ENCODE measurements at regions of chr19 and their contacts with region 1.

Region 1: DNA sequence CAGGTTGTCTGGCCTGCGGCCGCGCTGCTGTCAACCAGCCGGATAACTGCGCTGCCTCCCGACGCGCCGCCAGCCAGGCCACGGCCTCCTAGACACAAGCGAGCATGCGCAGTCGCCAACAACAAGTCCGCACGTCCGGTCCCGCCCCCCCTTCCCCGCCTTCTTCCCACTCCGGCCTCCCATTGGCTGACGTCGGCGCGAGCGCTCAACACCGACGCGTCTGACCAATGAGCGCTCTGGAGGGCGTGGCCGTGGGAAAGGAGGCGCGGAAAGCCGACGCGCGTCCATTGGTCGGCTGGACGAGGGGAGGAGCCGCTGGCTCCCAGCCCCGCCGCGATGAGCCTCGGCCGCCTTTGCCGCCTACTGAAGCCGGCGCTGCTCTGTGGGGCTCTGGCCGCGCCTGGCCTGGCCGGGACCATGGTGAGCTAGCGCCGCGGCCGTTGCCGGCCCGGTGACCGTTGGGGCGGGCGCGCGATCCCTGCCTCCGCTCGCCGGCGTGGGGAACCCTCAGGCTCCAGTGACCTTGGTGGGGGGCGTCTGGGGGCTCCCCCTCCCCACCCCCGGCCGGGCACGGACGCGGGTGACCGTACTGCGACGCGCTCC is at the start of gene GPX4:
- DNase-seq: peak; percentile 96
- ATAC-seq: peak; percentile 80
- H3K4me3 ChIP-seq: peak within 1 kb of the TSS; percentile 91
- H3K27ac ChIP-seq: peak within 1 kb of the TSS; percentile 90
- H3K4me1 ChIP-seq: peaks cover 38% of the 10 kb centered on the region
- H3K27me3 ChIP-seq: no peaks in the 10 kb centered on the region
- CTCF ChIP-seq: no peak
- EP300 ChIP-seq: no peak
- POLR2A ChIP-seq: peak; percentile 99
- RAD21 ChIP-seq: no peak
- polyA plus RNA-seq, gene GPX4: 33.3 to 99.6 TPM

Region 2: GRCh38 chr19:1009041-1009975 is 94.5 kb before region 1 on chr19:
- CTCF ChIA-PET with region 1: no interaction called
- POLR2A ChIA-PET with region 1: no interaction called
- RAD21 ChIA-PET with region 1: no interaction called
- SMC1A ChIA-PET with region 1: no interaction called
- in situ Hi-C with region 1: no loop called
- intact Hi-C with region 1: no loop called
- DNase-seq: no peak
- ATAC-seq: 0 out of 3 replicates have a peak, but pooled peaks have one; percentile 9
- H3K4me3 ChIP-seq: no peak overlapping the region
- H3K27ac ChIP-seq: no peak overlapping the region
- H3K4me1 ChIP-seq: no peaks in the 10 kb centered on the region
- H3K27me3 ChIP-seq: no peaks in the 10 kb centered on the region
- CTCF ChIP-seq: no peak
- EP300 ChIP-seq: no peak
- POLR2A ChIP-seq: peak; percentile 40
- RAD21 ChIP-seq: no peak

Region 3: GRCh38 chr19:1020868-1021425 is 82.9 kb before region 1 on chr19 and contains the start of gene TMEM259:
- CTCF ChIA-PET with region 1: no interaction called
- POLR2A ChIA-PET with region 1: interaction called, 5 read pairs
- RAD21 ChIA-PET with region 1: no interaction called
- SMC1A ChIA-PET with region 1: interaction called, 3 read pairs
- in situ Hi-C with region 1: no loop called
- intact Hi-C with region 1: loop called (anchors 2 kb)
- DNase-seq: peak; percentile 92
- ATAC-seq: peak; percentile 86
- H3K4me3 ChIP-seq: peak within 1 kb of the TSS; percentile 83
- H3K27ac ChIP-seq: peak within 1 kb of the TSS; percentile 99
- H3K4me1 ChIP-seq: peaks cover 30% of the 10 kb centered on the region
- H3K27me3 ChIP-seq: no peaks in the 10 kb centered on the region
- CTCF ChIP-seq: no peak
- EP300 ChIP-seq: no peak
- POLR2A ChIP-seq: peak; percentile 82
- RAD21 ChIP-seq: no peak
- polyA plus RNA-seq, gene TMEM259: 0.43 to 0.86 TPM

Region 4: DNA sequence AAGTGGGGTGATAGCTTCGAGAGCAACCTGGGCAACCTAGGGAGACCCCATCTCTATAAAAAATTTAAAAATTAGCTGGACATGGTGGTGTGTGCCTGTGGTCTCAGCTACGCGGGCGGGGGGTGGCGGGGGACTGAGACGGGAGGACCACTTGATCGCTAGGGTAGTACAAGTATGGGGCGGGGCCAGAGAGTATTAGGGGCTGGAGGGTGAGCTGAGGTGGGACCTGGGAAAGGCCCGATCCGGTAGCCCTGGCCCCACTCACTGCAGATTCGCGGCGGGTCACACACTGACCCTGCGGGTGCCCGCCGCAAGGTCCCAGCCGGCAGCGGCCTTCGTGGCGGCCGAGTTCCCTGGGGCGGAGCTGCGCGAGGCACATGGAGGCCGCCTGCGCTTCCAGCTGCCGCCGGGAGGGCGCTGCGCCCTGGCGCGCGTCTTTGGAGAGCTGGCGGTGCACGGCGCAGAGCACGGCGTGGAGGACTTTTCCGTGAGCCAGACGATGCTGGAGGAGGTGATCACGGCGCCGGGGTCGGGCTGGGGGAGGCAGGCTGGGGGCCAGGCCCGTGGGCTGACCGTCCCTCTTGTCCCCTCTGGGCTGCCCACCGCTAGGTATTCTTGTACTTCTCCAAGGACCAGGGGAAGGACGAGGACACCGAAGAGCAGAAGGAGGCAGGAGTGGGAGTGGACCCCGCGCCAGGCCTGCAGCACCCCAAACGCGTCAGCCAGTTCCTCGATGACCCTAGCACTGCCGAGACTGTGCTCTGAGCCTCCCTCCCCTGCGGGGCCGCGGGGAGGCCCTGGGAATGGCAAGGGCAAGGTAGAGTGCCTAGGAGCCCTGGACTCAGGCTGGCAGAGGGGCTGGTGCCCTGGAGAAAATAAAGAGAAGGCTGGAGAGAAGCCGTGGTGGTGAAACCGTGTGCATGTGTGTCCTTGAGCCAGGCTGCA is 38.9 kb before region 1 on chr19:
- CTCF ChIA-PET with region 1: interaction called, 4 read pairs
- POLR2A ChIA-PET with region 1: interaction called, 45 read pairs
- RAD21 ChIA-PET with region 1: interaction called, 13 read pairs
- SMC1A ChIA-PET with region 1: interaction called, 12 read pairs
- in situ Hi-C with region 1: no loop called
- intact Hi-C with region 1: loop called (anchors 2 kb)
- DNase-seq: no peak
- ATAC-seq: peak; percentile 73
- H3K4me3 ChIP-seq: no peak overlapping the region
- H3K27ac ChIP-seq: no peak overlapping the region
- H3K4me1 ChIP-seq: peaks cover 17% of the 10 kb centered on the region
- H3K27me3 ChIP-seq: no peaks in the 10 kb centered on the region
- CTCF ChIP-seq: peak; percentile 73 to 85 (median 82)
- EP300 ChIP-seq: no peak; a peak in 1 of 4 replicates
- POLR2A ChIP-seq: no peak; the same call in 1 of the 2 replicates
- RAD21 ChIP-seq: peak; percentile 54

Region 5: DNA sequence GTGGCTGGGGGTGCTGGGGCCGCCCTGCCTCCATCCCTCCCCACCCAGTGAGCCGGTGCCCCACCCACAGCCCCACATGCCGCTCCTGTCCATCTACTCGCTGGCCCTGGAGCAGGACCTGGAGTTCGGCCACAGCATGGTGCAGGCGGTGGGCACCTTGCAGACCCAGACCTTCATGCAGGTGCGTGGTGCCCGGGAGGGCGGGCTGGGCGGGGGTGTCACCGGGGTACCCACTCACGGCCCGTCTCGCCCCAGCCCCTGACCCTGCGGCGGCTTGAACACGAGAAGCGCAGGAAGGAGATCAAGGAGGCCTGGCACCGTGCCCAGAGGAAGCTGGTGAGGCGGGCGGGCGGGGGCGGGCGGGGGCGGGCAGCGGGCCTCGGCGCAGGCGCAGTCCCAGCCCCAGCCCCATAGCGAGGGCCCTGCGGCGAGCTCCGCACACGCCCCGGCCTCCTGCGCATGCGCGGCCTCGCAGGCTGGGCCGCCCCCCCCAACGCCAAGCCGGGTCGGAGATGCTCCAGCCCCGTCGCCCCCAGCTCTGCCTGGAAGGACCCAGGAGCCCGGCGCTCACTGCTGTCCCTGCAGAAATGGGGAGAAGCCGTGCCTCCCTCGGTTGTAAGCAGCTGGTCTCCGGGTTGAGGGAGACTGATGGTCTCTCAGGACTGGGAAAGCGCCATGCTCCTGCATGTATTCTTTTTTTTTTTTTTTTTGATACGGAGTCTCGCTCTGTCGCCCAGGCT is 29.1 kb before region 1 on chr19:
- CTCF ChIA-PET with region 1: interaction called, 6 read pairs
- POLR2A ChIA-PET with region 1: interaction called, 24 read pairs
- RAD21 ChIA-PET with region 1: interaction called, 9 read pairs
- SMC1A ChIA-PET with region 1: no interaction called
- in situ Hi-C with region 1: no loop called
- intact Hi-C with region 1: loop called (anchors 2 kb)
- DNase-seq: no peak
- ATAC-seq: peak; percentile 41
- H3K4me3 ChIP-seq: peak overlapping the region; percentile 74; the same call in 1 of the 2 replicates
- H3K27ac ChIP-seq: no peak overlapping the region; the same call in 1 of the 2 replicates
- H3K4me1 ChIP-seq: peaks cover 32% of the 10 kb centered on the region
- H3K27me3 ChIP-seq: no peaks in the 10 kb centered on the region
- CTCF ChIP-seq: no peak
- EP300 ChIP-seq: no peak
- POLR2A ChIP-seq: no peak; the same call in none of the 2 replicates
- RAD21 ChIP-seq: no peak

Region 6: GRCh38 chr19:1183534-1184172 is 79.8 kb after region 1 on chr19:
- CTCF ChIA-PET with region 1: no interaction called
- POLR2A ChIA-PET with region 1: interaction called, 5 read pairs
- RAD21 ChIA-PET with region 1: interaction called, 3 read pairs
- SMC1A ChIA-PET with region 1: interaction called, 4 read pairs
- in situ Hi-C with region 1: no loop called
- intact Hi-C with region 1: loop called (anchors 5 kb)
- DNase-seq: peak; percentile 66
- ATAC-seq: peak; percentile 87
- H3K4me3 ChIP-seq: no peak overlapping the region
- H3K27ac ChIP-seq: peak overlapping the region; percentile 59
- H3K4me1 ChIP-seq: peaks cover 31% of the 10 kb centered on the region
- H3K27me3 ChIP-seq: no peaks in the 10 kb centered on the region
- CTCF ChIP-seq: no peak
- EP300 ChIP-seq: peak; percentile 52 to 54; a peak in 2 of 4 replicates
- POLR2A ChIP-seq: no peak
- RAD21 ChIP-seq: no peak

Region 7: DNA sequence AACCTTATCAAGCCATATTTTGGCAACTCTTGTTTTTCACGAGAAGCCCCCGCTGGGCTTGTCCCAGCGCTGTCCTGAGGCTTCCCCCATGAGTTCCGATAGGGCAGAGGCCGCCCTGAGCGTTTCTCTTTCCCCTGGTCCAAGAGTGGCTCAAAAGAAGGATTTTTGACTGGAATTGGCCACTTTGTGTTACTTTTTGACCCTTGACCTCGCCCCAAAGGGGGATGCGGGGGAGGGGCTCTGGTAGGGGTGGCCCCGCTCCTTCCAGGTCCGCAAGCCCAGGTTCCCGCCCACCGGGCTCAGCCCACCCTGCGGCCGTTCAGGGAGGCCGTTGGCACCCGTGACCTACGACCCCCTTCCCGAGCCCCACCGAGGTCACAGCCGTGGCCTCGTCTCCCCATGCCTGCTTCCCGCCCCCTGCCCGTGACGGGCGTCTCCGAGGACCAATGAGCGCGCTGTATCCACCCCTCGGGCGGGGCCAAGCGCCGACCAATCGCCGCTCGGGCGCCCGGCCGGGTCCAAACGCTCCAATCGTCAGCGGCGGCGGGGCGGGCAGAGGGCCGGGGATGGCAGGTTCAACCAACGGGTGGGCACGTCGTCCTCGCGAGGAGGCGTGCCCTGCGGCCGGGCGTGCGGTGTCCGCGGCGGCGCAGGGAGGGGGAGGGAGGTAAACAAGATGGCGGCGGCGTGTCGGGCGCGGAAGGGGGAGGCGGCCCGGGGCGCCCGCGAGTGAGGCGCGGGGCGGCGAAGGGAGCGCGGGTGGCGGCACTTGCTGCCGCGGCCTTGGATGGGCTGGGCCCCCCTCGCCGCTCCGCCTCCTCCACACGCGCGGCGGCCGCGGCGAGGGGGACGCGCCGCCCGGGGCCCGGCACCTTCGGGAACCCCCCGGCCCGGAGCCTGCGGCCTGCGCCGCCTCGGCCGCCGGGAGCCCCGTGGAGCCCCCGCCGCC is 101.6 kb after region 1 on chr19 and contains the start of gene STK11:
- CTCF ChIA-PET with region 1: no interaction called
- POLR2A ChIA-PET with region 1: interaction called, 5 read pairs
- RAD21 ChIA-PET with region 1: no interaction called
- SMC1A ChIA-PET with region 1: no interaction called
- in situ Hi-C with region 1: loop called (anchors 5 kb)
- intact Hi-C with region 1: no loop called
- DNase-seq: peak; percentile 83
- ATAC-seq: peak; percentile 97
- H3K4me3 ChIP-seq: peak within 1 kb of the TSS; percentile 98
- H3K27ac ChIP-seq: peak within 1 kb of the TSS; percentile 66
- H3K4me1 ChIP-seq: peaks cover 17% of the 10 kb centered on the region
- H3K27me3 ChIP-seq: no peaks in the 10 kb centered on the region
- CTCF ChIP-seq: no peak
- EP300 ChIP-seq: no peak
- POLR2A ChIP-seq: peak; percentile 85
- RAD21 ChIP-seq: no peak
- polyA plus RNA-seq, gene STK11: 0.33 to 0.74 TPM

Measured in GM12878 (cell line).